Right cardiac atrium (tissue), 5 donors: ENCODE measurements at regions of chr9 and their contacts with region 1.

Region 1: GRCh38 chr9:81671880-81672280 is 17.5 kb downstream of the TLE1 start:
- DNase-seq: peak; percentile 94 to 96 (median 94)
- ATAC-seq: peak; percentile 99
- H3K4me3 ChIP-seq: no peak overlapping the region
- H3K27ac ChIP-seq: no peak overlapping the region
- H3K4me1 ChIP-seq: peaks cover 6% of the 10 kb centered on the region
- H3K27me3 ChIP-seq: no peaks in the 10 kb centered on the region

Region 2: GRCh38 chr9:80467632-80468031 is 1204.2 kb before region 1 on chr9:
- intact Hi-C with region 1: no loop called
- DNase-seq: peak in 1 of 3 donors; percentile 27
- ATAC-seq: peak; percentile 87 to 90
- H3K4me3 ChIP-seq: no peak overlapping the region
- H3K27ac ChIP-seq: no peak overlapping the region
- H3K4me1 ChIP-seq: no peaks in the 10 kb centered on the region
- H3K27me3 ChIP-seq: no peaks in the 10 kb centered on the region

Region 3: DNA sequence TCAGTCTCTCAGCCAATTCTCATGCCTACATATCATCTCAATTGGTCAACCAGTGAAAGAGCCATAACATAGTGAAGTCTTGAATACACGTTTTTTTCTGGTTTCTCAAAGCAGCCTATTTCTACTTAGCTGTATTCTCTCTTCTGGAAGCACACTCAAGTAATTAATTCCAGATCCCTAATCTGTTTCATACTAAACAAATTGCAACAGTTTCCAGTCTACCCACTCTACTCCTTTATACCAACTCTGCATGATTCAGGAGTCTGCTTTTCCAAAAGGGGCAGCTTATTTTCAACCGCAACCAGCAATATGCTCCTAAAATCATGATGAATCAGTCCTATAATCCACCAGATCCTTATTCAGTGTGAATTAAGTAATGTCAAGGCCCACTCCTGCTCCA is 194.2 kb before region 1 on chr9:
- intact Hi-C with region 1: no loop called
- DNase-seq: no peak
- ATAC-seq: no peak
- H3K4me3 ChIP-seq: no peak overlapping the region
- H3K27ac ChIP-seq: no peak overlapping the region
- H3K4me1 ChIP-seq: no peaks in the 10 kb centered on the region
- H3K27me3 ChIP-seq: no peaks in the 10 kb centered on the region

Region 4: DNA sequence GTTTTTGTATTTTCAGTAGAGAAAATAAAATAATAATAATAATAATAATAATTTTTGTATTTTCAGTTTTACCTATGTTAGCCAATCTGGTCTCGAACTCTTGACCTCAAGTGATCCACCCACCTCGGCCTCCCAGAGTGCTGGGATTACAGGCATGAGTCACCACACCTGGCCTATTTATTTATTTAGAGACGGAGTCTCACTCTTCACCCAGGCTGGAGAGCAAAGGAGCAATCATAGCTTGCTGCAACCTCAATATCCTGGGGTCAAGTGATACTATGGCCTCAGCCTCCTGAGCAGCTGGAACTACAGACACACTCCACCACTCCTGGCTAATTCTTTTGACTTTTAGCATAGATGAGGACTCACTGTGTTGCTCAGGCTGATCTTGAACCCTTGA is 150.0 kb before region 1 on chr9:
- intact Hi-C with region 1: loop called in 2 of 4 experiments (anchors 5 kb)
- DNase-seq: no peak
- ATAC-seq: no peak
- H3K4me3 ChIP-seq: no peak overlapping the region
- H3K27ac ChIP-seq: no peak overlapping the region
- H3K4me1 ChIP-seq: no peaks in the 10 kb centered on the region
- H3K27me3 ChIP-seq: no peaks in the 10 kb centered on the region

Region 5: GRCh38 chr9:81574405-81574804 is 97.5 kb before region 1 on chr9:
- intact Hi-C with region 1: no loop called
- DNase-seq: no peak
- ATAC-seq: no peak
- H3K4me3 ChIP-seq: no peak overlapping the region
- H3K27ac ChIP-seq: no peak overlapping the region
- H3K4me1 ChIP-seq: no peaks in the 10 kb centered on the region
- H3K27me3 ChIP-seq: no peaks in the 10 kb centered on the region

Region 6: GRCh38 chr9:81609782-81610739 is 61.8 kb before region 1 on chr9:
- intact Hi-C with region 1: no loop called
- DNase-seq: no peak
- ATAC-seq: no peak
- H3K4me3 ChIP-seq: no peak overlapping the region
- H3K27ac ChIP-seq: no peak overlapping the region
- H3K4me1 ChIP-seq: peaks cover 4% of the 10 kb centered on the region
- H3K27me3 ChIP-seq: no peaks in the 10 kb centered on the region